ENCODE measurements at regions of chr2 and their contacts with region 1.

Region 1: GRCh38 chr2:174023591-174024523 is 58.7 kb upstream of the SP3 start:
- DNase-seq: peak in 1 of 2 experiments; percentile 75
- H3K4me3 ChIP-seq: peak overlapping the region in 1 of 4 experiments; percentile 2; a peak in 2 of 8 replicates
- H3K27ac ChIP-seq: no peak overlapping the region
- H3K4me1 ChIP-seq: peaks cover 8 to 23% (median 15%) of the 10 kb centered on the region in 4 experiments
- H3K27me3 ChIP-seq: no peaks in the 10 kb centered on the region; a peak in 1 of 7 replicates
- CTCF ChIP-seq: no peak
- EP300 ChIP-seq: peak in 1 of 2 experiments; percentile 78; a peak in 1 of 3 replicates
- POLR2A ChIP-seq: no peak
- RAD21 ChIP-seq: no peak

Region 2: DNA sequence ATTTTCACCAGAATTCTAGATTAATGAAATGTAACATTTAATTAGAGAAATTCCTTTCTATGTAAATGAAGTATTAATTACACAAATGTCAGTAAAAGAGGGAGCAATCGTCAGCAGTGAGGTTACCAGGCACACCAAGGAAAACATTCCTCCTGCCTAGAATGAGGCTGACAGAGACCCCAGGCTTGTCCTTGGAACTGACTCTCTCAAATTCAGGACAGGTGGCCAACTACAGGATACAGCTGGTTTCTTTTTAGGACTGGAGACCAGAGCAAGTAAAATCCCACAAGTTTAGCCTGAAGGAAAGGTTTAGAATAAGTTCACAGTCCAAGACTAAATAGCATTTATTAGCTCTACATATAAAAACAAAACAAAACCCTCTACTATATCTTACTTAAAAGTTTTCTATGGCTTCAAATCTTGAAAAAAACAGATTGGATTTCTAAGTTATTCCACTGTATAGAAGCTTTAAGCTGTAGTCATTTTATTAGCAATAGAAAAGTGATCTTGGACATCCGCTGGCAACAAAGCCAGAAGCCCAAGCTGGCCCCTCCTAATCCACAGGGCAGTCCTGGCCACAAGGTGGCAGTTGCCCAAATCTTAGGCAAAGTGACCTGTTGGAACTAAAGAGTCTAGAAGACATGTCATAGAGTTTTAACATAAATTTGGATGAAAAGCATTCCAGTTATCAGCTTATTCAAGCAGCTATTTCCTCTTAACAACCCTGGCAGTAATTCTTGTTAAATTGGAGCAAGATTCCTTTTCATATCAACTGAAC is 139.6 kb before region 1 on chr2:
- CTCF ChIA-PET with region 1: no interaction called
- POLR2A ChIA-PET with region 1: no interaction called
- DNase-seq: no peak
- H3K4me3 ChIP-seq: no peak overlapping the region
- H3K27ac ChIP-seq: no peak overlapping the region
- H3K4me1 ChIP-seq: no peaks in the 10 kb centered on the region
- H3K27me3 ChIP-seq: no peaks in the 10 kb centered on the region
- CTCF ChIP-seq: peak; percentile 70 to 79 (median 73)
- EP300 ChIP-seq: no peak
- POLR2A ChIP-seq: no peak
- RAD21 ChIP-seq: peak; percentile 60 to 77

Region 3: GRCh38 chr2:174012347-174013314 is 11.2 kb before region 1 on chr2:
- CTCF ChIA-PET with region 1: interaction called, 8 read pairs
- POLR2A ChIA-PET with region 1: interaction called, 15 read pairs
- DNase-seq: peak in 1 of 2 experiments; percentile 83
- H3K4me3 ChIP-seq: peak overlapping the region; percentile 25 to 60 (median 35)
- H3K27ac ChIP-seq: no peak overlapping the region
- H3K4me1 ChIP-seq: peaks cover 5 to 20% (median 14%) of the 10 kb centered on the region in 4 experiments
- H3K27me3 ChIP-seq: peaks cover 0 to 8% (median 5%) of the 10 kb centered on the region in 4 experiments; a peak in 4 of 7 replicates
- CTCF ChIP-seq: no peak
- EP300 ChIP-seq: peak in 1 of 2 experiments; percentile 15; a peak in 2 of 3 replicates
- POLR2A ChIP-seq: peak in 1 of 2 experiments; percentile 56; a peak in 1 of 3 replicates
- RAD21 ChIP-seq: no peak

Region 4: GRCh38 chr2:174039551-174040416 is 15.9 kb after region 1 on chr2:
- CTCF ChIA-PET with region 1: interaction called, 16 read pairs
- POLR2A ChIA-PET with region 1: interaction called, 8 read pairs
- DNase-seq: peak; percentile 77 to 90
- H3K4me3 ChIP-seq: no peak overlapping the region
- H3K27ac ChIP-seq: 0 out of 2 replicates have a peak overlapping the region, but pooled peaks have one; percentile 39
- H3K4me1 ChIP-seq: peaks cover 4 to 7% (median 6%) of the 10 kb centered on the region in 4 experiments; a peak in 6 of 7 replicates
- H3K27me3 ChIP-seq: no peaks in the 10 kb centered on the region
- CTCF ChIP-seq: peak; percentile 83 to 90 (median 87)
- EP300 ChIP-seq: no peak
- POLR2A ChIP-seq: no peak
- RAD21 ChIP-seq: peak; percentile 61 to 70

Measured in H1 (cell line).